ENCODE measurements at regions of chr19 and their contacts with region 1.

Region 1: DNA sequence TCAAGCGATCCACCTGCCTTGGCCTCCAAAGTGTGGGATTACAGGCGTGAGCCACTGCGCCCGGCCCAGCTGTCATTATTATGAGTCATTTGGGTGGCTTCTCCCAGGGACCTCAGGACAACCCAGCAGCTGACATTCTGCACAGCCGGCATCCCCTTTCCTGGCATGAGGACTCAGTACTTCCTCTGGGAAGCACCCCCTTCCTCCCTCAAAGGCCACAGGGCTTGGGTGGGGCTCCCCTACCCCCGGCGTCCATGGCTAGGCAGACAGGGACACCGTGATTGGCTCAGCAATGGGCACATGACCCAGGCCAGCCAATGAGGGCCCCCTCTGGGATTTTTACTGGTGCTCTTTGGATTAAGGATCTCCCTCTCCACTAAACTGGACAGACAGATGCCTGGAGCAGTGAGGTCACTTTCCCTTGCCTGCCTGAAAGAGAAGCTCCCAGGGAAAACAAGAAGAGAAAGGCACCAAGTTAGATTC is 6.0 kb downstream of the KANK2 start:
- DNase-seq: peak; percentile 54
- H3K4me3 Mint-ChIP-seq: no peak overlapping the region
- H3K27ac Mint-ChIP-seq: no peak overlapping the region
- H3K4me1 Mint-ChIP-seq: peaks cover 13% of the 10 kb centered on the region
- H3K27me3 Mint-ChIP-seq: no peaks in the 10 kb centered on the region
- CTCF ChIP-seq: no peak

Region 2: GRCh38 chr19:11078893-11079292 is 112.4 kb before region 1 on chr19:
- CTCF ChIA-PET with region 1: no interaction called
- POLR2A ChIA-PET with region 1: no interaction called
- intact Hi-C with region 1: no loop called
- DNase-seq: no peak
- H3K4me3 Mint-ChIP-seq: no peak overlapping the region
- H3K27ac Mint-ChIP-seq: no peak overlapping the region
- H3K4me1 Mint-ChIP-seq: peaks cover 10% of the 10 kb centered on the region
- H3K27me3 Mint-ChIP-seq: no peaks in the 10 kb centered on the region
- CTCF ChIP-seq: no peak

Region 3: GRCh38 chr19:11155373-11156120 is 35.8 kb before region 1 on chr19 and contains the start of gene SPC24:
- CTCF ChIA-PET with region 1: no interaction called
- POLR2A ChIA-PET with region 1: interaction called, 16 read pairs
- intact Hi-C with region 1: no loop called
- DNase-seq: peak; percentile 99
- H3K4me3 Mint-ChIP-seq: peak within 1 kb of the TSS; percentile 77
- H3K27ac Mint-ChIP-seq: peak within 1 kb of the TSS; percentile 44
- H3K4me1 Mint-ChIP-seq: peaks cover 22% of the 10 kb centered on the region
- H3K27me3 Mint-ChIP-seq: no peaks in the 10 kb centered on the region
- CTCF ChIP-seq: no peak
- total RNA-seq, gene SPC24: 8.6 and 16.4 TPM in 2 replicates

Region 4: GRCh38 chr19:11164879-11165406 is 26.4 kb before region 1 on chr19:
- CTCF ChIA-PET with region 1: interaction called, 10 read pairs
- POLR2A ChIA-PET with region 1: interaction called, 11 read pairs
- intact Hi-C with region 1: no loop called
- DNase-seq: no peak
- H3K4me3 Mint-ChIP-seq: no peak overlapping the region
- H3K27ac Mint-ChIP-seq: no peak overlapping the region
- H3K4me1 Mint-ChIP-seq: peaks cover 12% of the 10 kb centered on the region
- H3K27me3 Mint-ChIP-seq: no peaks in the 10 kb centered on the region
- CTCF ChIP-seq: no peak

Region 5: GRCh38 chr19:11339254-11340098 is 148.2 kb after region 1 on chr19 and contains the start of gene RAB3D:
- CTCF ChIA-PET with region 1: no interaction called
- POLR2A ChIA-PET with region 1: no interaction called
- intact Hi-C with region 1: no loop called
- DNase-seq: peak; percentile 93
- H3K4me3 Mint-ChIP-seq: peak within 1 kb of the TSS; percentile 74
- H3K27ac Mint-ChIP-seq: peak within 1 kb of the TSS; percentile 59
- H3K4me1 Mint-ChIP-seq: peaks cover 16% of the 10 kb centered on the region
- H3K27me3 Mint-ChIP-seq: no peaks in the 10 kb centered on the region
- CTCF ChIP-seq: no peak
- total RNA-seq, gene RAB3D: 42.8 and 46.5 TPM in 2 replicates

Measured in MCF 10A (cell line).